OCI-LY7 (cell line): ENCODE measurements at regions of chr3 and their contacts with region 1.

Region 1: GRCh38 chr3:20197775-20198174 is 11.8 kb upstream of the SGO1 start:
- DNase-seq: no peak
- H3K4me3 ChIP-seq: no peak overlapping the region
- H3K27ac ChIP-seq: no peak overlapping the region
- H3K4me1 ChIP-seq: no peaks in the 10 kb centered on the region
- CTCF ChIP-seq: no peak

Region 2: GRCh38 chr3:19885468-19885867 is 312.3 kb before region 1 on chr3:
- CTCF ChIA-PET with region 1: no interaction called
- POLR2A ChIA-PET with region 1: no interaction called
- intact Hi-C with region 1: loop called (anchors 10 kb)
- DNase-seq: peak; percentile 56
- H3K4me3 ChIP-seq: no peak overlapping the region
- H3K27ac ChIP-seq: no peak overlapping the region
- H3K4me1 ChIP-seq: no peaks in the 10 kb centered on the region
- CTCF ChIP-seq: peak; percentile 88